ENCODE measurements at regions of chr7 and their contacts with region 1.

Region 1: GRCh38 chr7:95865716-95866371 is 93.5 kb downstream of the DYNC1I1 start:
- DNase-seq: no peak
- ATAC-seq: no peak
- H3K4me3 ChIP-seq: no peak overlapping the region
- H3K27ac ChIP-seq: no peak overlapping the region
- H3K4me1 ChIP-seq: no peaks in the 10 kb centered on the region
- H3K27me3 ChIP-seq: no peaks in the 10 kb centered on the region
- CTCF ChIP-seq: no peak

Region 2: GRCh38 chr7:95700917-95701316 is 164.9 kb before region 1 on chr7:
- intact Hi-C with region 1: no loop called
- DNase-seq: no peak
- ATAC-seq: no peak
- H3K4me3 ChIP-seq: no peak overlapping the region
- H3K27ac ChIP-seq: no peak overlapping the region
- H3K4me1 ChIP-seq: no peaks in the 10 kb centered on the region
- H3K27me3 ChIP-seq: peaks cover 0 to 8% (median 0%) of the 10 kb centered on the region in 3 donors
- CTCF ChIP-seq: no peak

Region 3: DNA sequence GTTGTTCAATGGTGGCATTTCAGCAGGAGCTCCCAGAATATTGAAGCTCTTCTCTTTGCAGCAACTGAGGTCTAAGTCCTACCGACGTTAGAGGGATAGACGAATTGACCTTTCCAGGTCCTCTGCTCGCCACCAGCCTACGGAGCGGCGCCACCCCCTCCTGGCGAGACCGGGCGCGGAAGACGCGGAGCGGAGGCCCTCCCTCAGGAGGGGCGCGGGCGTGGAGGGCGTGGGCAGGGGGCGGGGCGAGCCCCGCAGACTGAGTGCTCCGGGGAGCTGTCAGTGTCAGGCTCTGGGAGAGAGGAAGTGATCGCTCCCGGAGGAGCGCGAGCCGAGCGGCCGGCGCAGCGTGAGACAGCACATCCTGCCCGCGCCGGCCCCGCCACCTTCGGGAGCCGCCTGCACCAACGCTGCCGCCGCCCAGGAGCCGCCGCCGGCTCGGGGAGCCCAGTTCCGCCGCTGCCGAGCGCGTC is 93.5 kb before region 1 on chr7 and contains the start of gene DYNC1I1:
- intact Hi-C with region 1: loop called in 1 of 2 experiments (anchors 5 kb)
- DNase-seq: peak; percentile 71 to 81
- ATAC-seq: peak; percentile 72 to 89 (median 87)
- H3K4me3 ChIP-seq: peak within 1 kb of the TSS; percentile 82
- H3K27ac ChIP-seq: no peak within 1 kb of the TSS
- H3K4me1 ChIP-seq: peaks cover 5% of the 10 kb centered on the region
- H3K27me3 ChIP-seq: peaks cover 0 to 5% (median 0%) of the 10 kb centered on the region in 3 donors
- CTCF ChIP-seq: no peak
- total RNA-seq, gene DYNC1I1: 3.1 to 28.8 (median 7.4) TPM